Esophagus squamous epithelium (tissue), 5 donors: ENCODE measurements at regions of chr10 and their contacts with region 1.

Region 1: GRCh38 chr10:91974960-91975359 is 51.4 kb downstream of the BTAF1 start:
- DNase-seq: no peak
- H3K4me3 ChIP-seq: no peak overlapping the region
- H3K27ac ChIP-seq: no peak overlapping the region
- H3K4me1 ChIP-seq: no peaks in the 10 kb centered on the region
- H3K27me3 ChIP-seq: no peaks in the 10 kb centered on the region
- CTCF ChIP-seq: no peak
- POLR2A ChIP-seq: no peak

Region 2: GRCh38 chr10:92436611-92437010 is 461.7 kb after region 1 on chr10:
- intact Hi-C with region 1: loop called (anchors 10 kb)
- DNase-seq: no peak
- H3K4me3 ChIP-seq: no peak overlapping the region
- H3K27ac ChIP-seq: no peak overlapping the region
- H3K4me1 ChIP-seq: peaks cover 0 to 6% (median 0%) of the 10 kb centered on the region in 3 donors
- H3K27me3 ChIP-seq: no peaks in the 10 kb centered on the region
- CTCF ChIP-seq: no peak
- POLR2A ChIP-seq: no peak